ENCODE measurements at regions of chrX and their contacts with region 1.

Region 1: DNA sequence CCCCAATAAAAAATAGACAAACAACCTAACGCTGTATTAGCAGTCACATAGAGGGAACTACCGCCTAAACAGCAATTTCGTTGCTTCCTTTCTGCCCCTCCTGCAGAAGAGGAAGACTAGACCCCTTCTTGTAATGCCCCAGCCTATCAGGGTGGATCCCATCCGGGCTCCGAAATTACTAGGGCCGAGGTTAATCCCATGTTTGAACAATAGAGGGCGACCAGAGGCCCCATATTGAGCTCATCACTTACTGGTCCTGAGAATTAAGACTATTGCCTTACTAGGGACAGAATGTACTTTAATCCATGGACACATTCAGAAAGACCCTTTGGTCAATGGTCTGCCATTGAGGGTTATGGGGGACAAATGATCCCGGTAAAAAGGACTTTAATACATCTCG is 11.8 kb upstream of the ZNF630 start:
- DNase-seq: peak in 1 of 2 experiments; percentile 18
- H3K4me3 ChIP-seq: no peak overlapping the region
- H3K27ac ChIP-seq: no peak overlapping the region
- H3K4me1 ChIP-seq: no peaks in the 10 kb centered on the region
- H3K27me3 ChIP-seq: no peaks in the 10 kb centered on the region
- CTCF ChIP-seq: peak; percentile 55; the same call in 1 of the 2 replicates

Region 2: DNA sequence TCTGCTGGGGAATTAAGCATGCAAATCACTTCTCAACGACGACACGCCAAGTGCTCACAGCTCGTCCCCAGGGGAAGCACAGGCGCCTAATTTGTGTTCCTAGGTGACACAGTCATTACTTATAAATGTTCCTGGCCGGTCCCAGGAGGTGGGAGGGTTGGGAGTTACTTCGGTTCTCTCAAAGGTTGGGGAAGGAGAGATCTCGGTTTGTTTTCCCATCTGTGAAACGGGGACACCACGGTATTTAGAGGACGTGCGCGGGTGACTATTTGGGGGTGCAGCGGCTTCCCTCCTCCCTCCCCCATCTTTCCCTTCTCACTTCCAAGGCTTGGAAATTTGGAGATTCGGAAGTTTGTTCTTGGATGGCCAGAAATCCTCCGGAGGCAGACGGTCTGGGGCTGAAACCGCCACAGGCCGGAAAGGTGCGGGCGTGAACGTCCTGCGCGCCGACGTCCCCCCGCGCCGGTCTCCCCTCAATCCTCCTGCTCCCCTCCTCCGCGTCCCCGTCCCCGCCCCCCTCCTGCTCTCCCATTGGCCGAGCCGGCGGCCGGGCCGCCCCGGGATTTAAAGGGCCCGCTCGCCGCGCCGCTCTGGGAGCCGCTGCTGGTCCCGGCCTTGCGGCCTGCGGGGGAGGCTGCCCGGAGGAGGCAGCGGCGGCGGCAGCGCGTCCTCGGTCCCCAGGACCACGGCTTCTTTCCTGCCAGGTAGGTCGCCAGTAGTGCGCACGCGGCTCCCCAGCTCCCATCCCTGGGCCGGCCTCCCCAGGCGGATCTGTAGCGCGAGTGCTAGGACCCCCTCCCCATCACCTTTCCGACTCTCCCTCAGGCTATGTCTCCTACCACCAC is 425.4 kb after region 1 on chrX and contains the start of gene PORCN:
- CTCF ChIA-PET with region 1: no interaction called
- POLR2A ChIA-PET with region 1: no interaction called
- intact Hi-C with region 1: loop called (anchors 2 kb)
- DNase-seq: peak; percentile 48 to 63
- H3K4me3 ChIP-seq: peak within 1 kb of the TSS; percentile 56
- H3K27ac ChIP-seq: peak within 1 kb of the TSS; percentile 77
- H3K4me1 ChIP-seq: no peaks in the 10 kb centered on the region
- H3K27me3 ChIP-seq: no peaks in the 10 kb centered on the region
- CTCF ChIP-seq: no peak
- total RNA-seq, gene PORCN: 11.9 and 14.1 TPM in 2 replicates